ENCODE measurements at regions of chr19 and their contacts with region 1.

Region 1: GRCh38 chr19:54390942-54391577 is 24.2 kb upstream of the TTYH1 start:
- DNase-seq: no peak
- ATAC-seq: no peak
- H3K4me3 ChIP-seq: no peak overlapping the region
- H3K27ac ChIP-seq: no peak overlapping the region
- H3K4me1 ChIP-seq: no peaks in the 10 kb centered on the region
- H3K27me3 ChIP-seq: peaks cover 5 to 9% (median 6%) of the 10 kb centered on the region in 3 donors
- CTCF ChIP-seq: peak in 3 of 5 experiments; percentile 47 to 55 (median 51)
- POLR2A ChIP-seq: no peak

Region 2: GRCh38 chr19:54168174-54168917 is 222.7 kb before region 1 on chr19:
- in situ Hi-C with region 1: no loop called
- intact Hi-C with region 1: loop called (anchors 5 kb)
- DNase-seq: peak; percentile 65 to 81
- ATAC-seq: peak; percentile 85 to 95
- H3K4me3 ChIP-seq: no peak overlapping the region
- H3K27ac ChIP-seq: no peak overlapping the region
- H3K4me1 ChIP-seq: peaks cover 0 to 7% of the 10 kb centered on the region in 2 donors
- H3K27me3 ChIP-seq: peaks cover 20 to 27% (median 23%) of the 10 kb centered on the region in 3 donors
- CTCF ChIP-seq: peak; percentile 69 to 88 (median 86)
- POLR2A ChIP-seq: no peak

Region 3: DNA sequence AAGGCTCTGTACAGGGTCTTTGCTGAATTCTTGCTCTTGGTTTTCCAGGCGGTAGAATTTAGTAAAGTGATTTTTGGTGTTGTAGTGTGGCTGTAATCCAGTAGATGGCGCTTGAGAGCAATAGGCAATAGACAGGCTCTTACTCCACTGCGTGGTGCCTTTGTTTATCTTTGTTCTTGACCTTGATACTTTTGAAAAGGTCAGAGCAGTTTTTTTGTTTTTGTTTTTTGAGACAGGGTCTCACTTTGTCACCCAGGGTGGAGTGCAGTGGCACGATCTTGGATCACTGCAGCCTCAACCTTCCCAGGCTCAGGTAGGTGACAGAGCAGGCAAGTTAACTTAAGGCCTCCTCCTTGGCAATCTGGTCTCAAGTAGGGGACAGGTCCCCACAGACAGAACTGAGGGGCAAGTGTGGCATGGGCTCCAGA is 65.9 kb before region 1 on chr19:
- in situ Hi-C with region 1: no loop called
- intact Hi-C with region 1: loop called (anchors 2 kb)
- DNase-seq: no peak
- ATAC-seq: no peak
- H3K4me3 ChIP-seq: no peak overlapping the region
- H3K27ac ChIP-seq: no peak overlapping the region
- H3K4me1 ChIP-seq: no peaks in the 10 kb centered on the region
- H3K27me3 ChIP-seq: no peaks in the 10 kb centered on the region
- CTCF ChIP-seq: peak in 4 of 5 experiments; percentile 11 to 56 (median 32)
- POLR2A ChIP-seq: no peak

Measured in gastrocnemius medialis (tissue), 4 donors.